Naive thymus-derived CD4-positive, alpha-beta T cell (primary cell): ENCODE measurements at regions of chr22 and their contacts with region 1.

Region 1: DNA sequence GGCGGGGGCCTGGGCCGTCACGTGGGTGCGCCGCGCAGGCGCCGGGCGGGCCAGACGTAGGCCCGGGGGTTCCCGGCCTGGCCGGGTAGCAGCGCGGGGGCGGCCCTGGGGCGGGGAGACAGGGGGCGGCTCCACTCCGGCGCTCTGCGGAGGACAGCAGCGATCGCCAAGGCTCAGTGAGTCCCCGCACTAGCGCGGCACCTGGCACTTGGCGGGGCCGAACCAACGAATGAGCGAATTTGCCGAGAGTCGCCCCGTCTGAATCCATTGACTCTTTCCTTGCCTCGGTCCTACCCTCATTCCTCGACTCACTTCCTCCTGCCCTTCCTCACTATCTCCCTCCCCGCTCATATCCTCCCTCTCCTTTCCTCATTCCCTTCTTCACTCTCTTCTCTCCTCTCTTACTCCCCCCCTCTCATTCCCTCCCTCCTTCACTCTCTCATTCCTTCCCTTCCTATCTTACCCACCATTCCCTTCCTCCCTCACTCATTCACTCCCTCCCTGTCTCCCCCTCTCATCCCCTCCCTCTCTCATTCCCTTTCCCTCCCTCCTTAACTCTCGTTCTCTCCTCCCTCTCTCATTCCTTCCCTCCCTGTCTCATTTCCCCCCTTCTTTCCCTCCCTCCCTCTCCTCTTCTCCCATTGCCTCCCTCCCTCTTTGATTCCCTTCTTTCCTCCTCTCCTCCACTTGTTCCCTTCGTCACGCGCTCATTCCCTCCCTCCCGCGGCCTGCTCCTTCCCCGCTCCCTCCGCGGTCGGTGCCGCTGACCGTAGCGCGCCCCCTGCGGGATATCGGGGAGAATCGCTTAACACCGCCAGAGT is 476 bp upstream of the KLHL22 start:
- DNase-seq: peak; percentile 82 to 97 (median 87)
- ATAC-seq: peak; percentile 98
- H3K4me3 ChIP-seq: peak overlapping the region; percentile 100
- H3K4me3 Mint-ChIP-seq: peak overlapping the region; percentile 88 to 98 (median 94)
- H3K27ac ChIP-seq: peak overlapping the region; percentile 85
- H3K27ac Mint-ChIP-seq: peak overlapping the region; percentile 89 to 95 (median 93)
- H3K4me1 ChIP-seq: peaks cover 7 to 41% of the 10 kb centered on the region in 2 donors
- H3K4me1 Mint-ChIP-seq: peaks cover 28 to 55% (median 49%) of the 10 kb centered on the region in 7 donors
- H3K27me3 ChIP-seq: no peaks in the 10 kb centered on the region
- H3K27me3 Mint-ChIP-seq: no peaks in the 10 kb centered on the region

Region 2: GRCh38 chr22:20319745-20320658 is 176.1 kb before region 1 on chr22 and contains the start of gene DGCR6L:
- CTCF ChIA-PET with region 1: no interaction called
- POLR2A ChIA-PET with region 1: no interaction called
- intact Hi-C with region 1: loop called in 1 of 2 experiments (anchors 10 kb)
- DNase-seq: peak; percentile 92 to 98 (median 95)
- ATAC-seq: peak; percentile 96
- H3K4me3 ChIP-seq: peak within 1 kb of the TSS; percentile 91
- H3K4me3 Mint-ChIP-seq: peak within 1 kb of the TSS; percentile 83 to 98 (median 92)
- H3K27ac ChIP-seq: peak within 1 kb of the TSS; percentile 89
- H3K27ac Mint-ChIP-seq: peak within 1 kb of the TSS; percentile 76 to 95 (median 89)
- H3K4me1 ChIP-seq: peaks cover 20 to 53% of the 10 kb centered on the region in 2 donors
- H3K4me1 Mint-ChIP-seq: peaks cover 28 to 70% (median 58%) of the 10 kb centered on the region in 7 donors
- H3K27me3 ChIP-seq: no peaks in the 10 kb centered on the region
- H3K27me3 Mint-ChIP-seq: no peaks in the 10 kb centered on the region
- total RNA-seq, gene DGCR6L: 29.4 to 55.3 (median 43.7) TPM

Region 3: DNA sequence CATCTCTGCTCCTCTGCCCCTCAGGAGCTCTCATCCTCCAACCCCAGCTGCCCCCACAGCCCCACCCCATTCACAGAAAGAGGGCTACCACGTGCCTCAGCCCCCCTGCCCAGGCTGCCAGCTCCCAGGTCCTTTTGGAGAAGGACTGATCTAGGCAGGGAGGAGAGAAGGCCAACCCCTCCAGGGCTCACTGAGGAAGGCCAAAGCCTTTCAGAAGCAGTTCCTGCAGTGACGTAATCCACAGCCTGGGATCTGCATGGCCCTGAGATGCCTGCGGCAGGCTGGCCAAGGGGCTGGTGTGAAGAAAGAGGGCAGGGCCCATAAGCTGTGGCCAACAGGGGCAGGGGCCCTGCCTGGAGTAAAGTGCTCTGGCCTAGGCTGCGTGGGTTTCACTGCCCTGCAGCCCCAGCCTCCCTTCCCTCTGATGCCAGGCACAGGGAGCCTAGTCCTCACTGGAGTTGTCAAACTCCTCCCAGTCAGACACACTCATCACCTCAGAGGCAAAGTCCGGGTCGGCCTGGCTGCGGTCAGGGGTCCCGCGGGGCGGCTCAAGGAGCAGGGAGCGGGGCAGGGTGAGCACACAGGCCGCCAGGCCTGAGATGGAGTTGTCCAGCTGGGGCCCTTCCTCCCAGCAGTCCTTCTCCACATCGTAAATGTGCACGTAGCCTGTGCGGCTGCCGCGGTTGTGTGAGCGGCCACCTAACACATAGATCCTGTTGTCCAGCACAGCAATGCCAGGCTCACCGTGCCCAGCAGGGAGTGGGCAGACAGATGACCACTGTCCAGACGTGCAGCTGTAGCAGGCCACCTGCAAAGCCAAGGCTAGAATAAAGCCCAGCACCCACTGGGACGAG is 54.2 kb before region 1 on chr22:
- CTCF ChIA-PET with region 1: no interaction called
- POLR2A ChIA-PET with region 1: no interaction called
- intact Hi-C with region 1: no loop called
- DNase-seq: no peak
- ATAC-seq: no peak
- H3K4me3 ChIP-seq: no peak overlapping the region
- H3K4me3 Mint-ChIP-seq: no peak overlapping the region
- H3K27ac ChIP-seq: no peak overlapping the region
- H3K27ac Mint-ChIP-seq: no peak overlapping the region
- H3K4me1 ChIP-seq: peaks cover 4 to 5% of the 10 kb centered on the region in 2 donors
- H3K4me1 Mint-ChIP-seq: peaks cover 4 to 10% (median 4%) of the 10 kb centered on the region in 7 donors
- H3K27me3 ChIP-seq: peaks cover 3 to 11% of the 10 kb centered on the region in 2 donors
- H3K27me3 Mint-ChIP-seq: peaks cover 5 to 22% (median 9%) of the 10 kb centered on the region in 5 donors

Region 4: GRCh38 chr22:20456064-20456721 is 39.9 kb before region 1 on chr22:
- CTCF ChIA-PET with region 1: interaction called, 3 read pairs
- POLR2A ChIA-PET with region 1: interaction called, 5 read pairs
- intact Hi-C with region 1: loop called in 1 of 2 experiments (anchors 1 kb)
- DNase-seq: peak; percentile 54 to 82 (median 72)
- ATAC-seq: peak; percentile 98
- H3K4me3 ChIP-seq: no peak overlapping the region
- H3K4me3 Mint-ChIP-seq: peak overlapping the region in 4 of 10 donors; percentile 20 to 36 (median 26)
- H3K27ac ChIP-seq: no peak overlapping the region
- H3K27ac Mint-ChIP-seq: peak overlapping the region in 5 of 9 donors; percentile 25 to 75 (median 51)
- H3K4me1 ChIP-seq: peaks cover 8 to 16% of the 10 kb centered on the region in 2 donors
- H3K4me1 Mint-ChIP-seq: peaks cover 13 to 40% (median 34%) of the 10 kb centered on the region in 7 donors
- H3K27me3 ChIP-seq: no peaks in the 10 kb centered on the region
- H3K27me3 Mint-ChIP-seq: no peaks in the 10 kb centered on the region

Region 5: DNA sequence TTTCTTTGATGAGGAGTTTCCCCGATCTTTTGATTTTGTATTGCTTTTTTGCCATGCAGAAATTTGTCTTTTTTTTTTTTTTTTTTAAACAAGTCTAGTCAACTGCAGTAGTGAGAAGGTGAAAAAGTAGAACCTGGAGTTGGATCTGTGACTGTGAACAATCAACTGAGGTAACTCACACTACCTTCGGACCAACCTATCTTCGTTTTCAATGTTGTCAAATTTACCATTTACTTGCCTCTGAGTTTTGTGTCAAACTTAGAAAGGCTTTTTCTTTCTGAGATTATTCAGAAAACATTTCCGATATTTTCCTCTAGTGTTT is 21.0 kb before region 1 on chr22:
- CTCF ChIA-PET with region 1: interaction called, 3 read pairs
- POLR2A ChIA-PET with region 1: interaction called, 11 read pairs
- intact Hi-C with region 1: loop called in 1 of 2 experiments (anchors 1 kb)
- DNase-seq: peak in 3 of 9 donors; percentile 14 to 24 (median 19)
- ATAC-seq: no peak
- H3K4me3 ChIP-seq: no peak overlapping the region
- H3K4me3 Mint-ChIP-seq: peak overlapping the region in 6 of 10 donors; percentile 16 to 62 (median 33)
- H3K27ac ChIP-seq: no peak overlapping the region
- H3K27ac Mint-ChIP-seq: peak overlapping the region; percentile 47 to 90 (median 75)
- H3K4me1 ChIP-seq: peaks cover 0 to 12% of the 10 kb centered on the region in 2 donors
- H3K4me1 Mint-ChIP-seq: peaks cover 20 to 52% (median 37%) of the 10 kb centered on the region in 7 donors
- H3K27me3 ChIP-seq: no peaks in the 10 kb centered on the region
- H3K27me3 Mint-ChIP-seq: no peaks in the 10 kb centered on the region

Region 6: GRCh38 chr22:20647586-20648305 is 151.7 kb after region 1 on chr22:
- CTCF ChIA-PET with region 1: no interaction called
- POLR2A ChIA-PET with region 1: no interaction called
- intact Hi-C with region 1: no loop called
- DNase-seq: no peak
- ATAC-seq: no peak
- H3K4me3 ChIP-seq: no peak overlapping the region
- H3K4me3 Mint-ChIP-seq: no peak overlapping the region
- H3K27ac ChIP-seq: no peak overlapping the region
- H3K27ac Mint-ChIP-seq: no peak overlapping the region
- H3K4me1 ChIP-seq: no peaks in the 10 kb centered on the region
- H3K4me1 Mint-ChIP-seq: no peaks in the 10 kb centered on the region
- H3K27me3 ChIP-seq: no peaks in the 10 kb centered on the region
- H3K27me3 Mint-ChIP-seq: peaks cover 0 to 10% (median 0%) of the 10 kb centered on the region in 5 donors

Region 7: GRCh38 chr22:20758688-20759087 is 262.6 kb after region 1 on chr22:
- CTCF ChIA-PET with region 1: no interaction called
- POLR2A ChIA-PET with region 1: no interaction called
- intact Hi-C with region 1: no loop called
- DNase-seq: no peak
- ATAC-seq: no peak
- H3K4me3 ChIP-seq: no peak overlapping the region
- H3K4me3 Mint-ChIP-seq: no peak overlapping the region
- H3K27ac ChIP-seq: no peak overlapping the region
- H3K27ac Mint-ChIP-seq: no peak overlapping the region
- H3K4me1 ChIP-seq: no peaks in the 10 kb centered on the region
- H3K4me1 Mint-ChIP-seq: no peaks in the 10 kb centered on the region
- H3K27me3 ChIP-seq: no peaks in the 10 kb centered on the region
- H3K27me3 Mint-ChIP-seq: no peaks in the 10 kb centered on the region

Region 8: GRCh38 chr22:20858615-20859416 is 362.7 kb after region 1 on chr22 and contains the starts of genes PI4KA and SNAP29:
- CTCF ChIA-PET with region 1: no interaction called
- POLR2A ChIA-PET with region 1: no interaction called
- intact Hi-C with region 1: loop called in 1 of 2 experiments (anchors 10 kb)
- DNase-seq: peak; percentile 92 to 98 (median 96)
- ATAC-seq: peak; percentile 97
- H3K4me3 ChIP-seq: peak within 1 kb of the TSS; percentile 78
- H3K4me3 Mint-ChIP-seq: peak within 1 kb of the TSS; percentile 87 to 95 (median 92)
- H3K27ac ChIP-seq: peak within 1 kb of the TSS; percentile 87
- H3K27ac Mint-ChIP-seq: peak within 1 kb of the TSS; percentile 60 to 92 (median 88)
- H3K4me1 ChIP-seq: peaks cover 17 to 20% of the 10 kb centered on the region in 2 donors
- H3K4me1 Mint-ChIP-seq: peaks cover 38 to 76% (median 58%) of the 10 kb centered on the region in 7 donors
- H3K27me3 ChIP-seq: no peaks in the 10 kb centered on the region
- H3K27me3 Mint-ChIP-seq: no peaks in the 10 kb centered on the region
- total RNA-seq, gene PI4KA: 120 to 181 (median 168) TPM
- total RNA-seq, gene SNAP29: 15.2 to 32.8 (median 25.4) TPM